IMR-90 (cell line): ENCODE measurements at regions of chr11 and their contacts with region 1.

Region 1: DNA sequence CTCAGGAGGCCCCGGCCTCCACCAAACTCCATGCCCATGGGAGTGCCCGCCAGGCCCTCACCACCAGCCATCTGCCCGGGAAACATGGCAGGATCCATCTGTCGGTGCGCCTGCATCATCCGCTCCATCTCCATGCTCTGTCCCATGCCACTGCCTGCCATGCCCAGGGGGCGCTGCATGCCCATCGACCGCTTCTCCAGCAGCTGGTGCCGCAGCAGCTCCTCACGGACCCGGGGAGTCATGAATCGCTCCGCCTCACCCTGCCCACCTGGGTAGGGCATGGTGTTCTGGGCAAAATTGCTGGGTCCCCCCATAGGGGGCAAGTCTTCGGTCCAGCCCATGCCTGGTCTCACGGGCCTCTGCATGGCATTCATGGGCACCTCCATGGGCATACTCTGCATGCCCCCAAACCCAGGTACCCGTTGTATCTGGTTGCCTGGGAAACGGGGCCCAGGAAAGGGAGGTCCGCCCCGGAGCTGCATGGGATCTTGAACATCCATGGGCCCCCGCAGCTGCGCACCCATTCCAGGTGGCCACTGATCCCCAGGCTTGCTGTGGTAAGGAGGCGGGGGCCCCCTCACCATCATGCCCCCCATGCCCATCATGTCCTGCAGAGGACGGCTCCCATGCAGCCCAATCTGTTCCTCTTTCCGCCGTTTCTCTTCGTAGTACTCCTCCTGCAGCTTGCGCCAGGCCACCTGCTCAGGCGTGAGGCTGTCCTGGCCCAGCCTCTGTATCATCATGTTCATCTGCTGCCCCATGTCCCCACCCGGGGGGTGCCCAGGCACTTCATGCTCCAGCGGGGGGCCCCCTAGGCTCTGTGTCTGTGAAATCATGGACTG is 18.0 kb downstream of the CXCR5 start:
- DNase-seq: no peak
- ATAC-seq: no peak
- H3K4me3 ChIP-seq: no peak overlapping the region
- H3K27ac ChIP-seq: no peak overlapping the region
- H3K4me1 ChIP-seq: peaks cover 2% of the 10 kb centered on the region; the same call in 1 of the 2 replicates
- H3K27me3 ChIP-seq: no peaks in the 10 kb centered on the region
- CTCF ChIP-seq: no peak
- POLR2A ChIP-seq: no peak
- RAD21 ChIP-seq: no peak

Region 2: DNA sequence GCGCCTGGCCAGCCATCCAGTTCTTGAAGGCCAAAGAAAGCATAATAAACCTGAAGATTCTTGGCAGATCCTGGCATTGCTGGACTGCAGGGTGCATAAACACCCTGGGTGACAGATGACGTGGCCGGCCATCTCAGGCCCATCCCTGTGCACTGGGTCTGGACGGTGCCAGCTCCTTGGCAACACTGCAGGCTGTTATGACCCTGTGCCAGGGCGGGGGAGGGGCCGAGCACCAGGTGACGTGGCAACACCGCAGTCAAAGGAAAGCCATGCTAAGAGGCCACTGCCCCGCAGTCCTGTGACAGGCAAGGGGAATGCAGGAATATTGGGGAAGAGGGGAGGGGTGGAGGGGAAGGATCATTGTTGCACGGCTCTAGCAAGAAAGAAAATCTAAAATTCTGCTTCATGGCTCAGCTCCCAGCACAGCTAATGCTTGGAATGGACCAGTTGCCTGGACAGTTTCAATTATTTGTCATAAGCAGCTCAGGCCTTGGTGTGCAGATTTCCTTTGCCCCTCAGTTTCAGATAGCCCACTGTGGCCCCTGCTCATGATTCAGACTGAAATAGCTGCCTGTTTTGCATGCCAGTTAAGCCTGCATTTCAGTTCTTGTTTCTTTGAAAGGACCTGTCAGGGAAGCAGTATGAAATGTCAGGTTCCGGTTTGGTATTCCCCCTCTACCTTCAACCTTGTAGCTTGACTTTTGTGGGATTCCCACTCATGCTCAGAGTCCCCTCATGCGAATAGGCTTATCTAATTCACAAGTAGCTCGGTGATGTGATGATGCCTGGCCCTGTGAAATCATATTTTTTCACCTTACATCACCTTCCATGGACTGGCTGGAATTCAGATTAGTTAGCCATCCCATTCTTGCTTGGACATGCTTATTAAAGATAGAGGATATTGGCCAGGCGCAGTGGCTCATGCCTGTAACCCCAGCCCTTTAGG is 81.0 kb before region 1 on chr11:
- CTCF ChIA-PET with region 1: no interaction called
- POLR2A ChIA-PET with region 1: no interaction called
- dilution Hi-C with region 1: no loop called
- in situ Hi-C with region 1: no loop called
- intact Hi-C with region 1: no loop called
- DNase-seq: no peak
- ATAC-seq: no peak
- H3K4me3 ChIP-seq: no peak overlapping the region
- H3K27ac ChIP-seq: no peak overlapping the region
- H3K4me1 ChIP-seq: no peaks in the 10 kb centered on the region
- H3K27me3 ChIP-seq: peaks cover 4% of the 10 kb centered on the region; the same call in 1 of the 2 replicates
- CTCF ChIP-seq: no peak
- POLR2A ChIP-seq: no peak
- RAD21 ChIP-seq: no peak

Region 3: DNA sequence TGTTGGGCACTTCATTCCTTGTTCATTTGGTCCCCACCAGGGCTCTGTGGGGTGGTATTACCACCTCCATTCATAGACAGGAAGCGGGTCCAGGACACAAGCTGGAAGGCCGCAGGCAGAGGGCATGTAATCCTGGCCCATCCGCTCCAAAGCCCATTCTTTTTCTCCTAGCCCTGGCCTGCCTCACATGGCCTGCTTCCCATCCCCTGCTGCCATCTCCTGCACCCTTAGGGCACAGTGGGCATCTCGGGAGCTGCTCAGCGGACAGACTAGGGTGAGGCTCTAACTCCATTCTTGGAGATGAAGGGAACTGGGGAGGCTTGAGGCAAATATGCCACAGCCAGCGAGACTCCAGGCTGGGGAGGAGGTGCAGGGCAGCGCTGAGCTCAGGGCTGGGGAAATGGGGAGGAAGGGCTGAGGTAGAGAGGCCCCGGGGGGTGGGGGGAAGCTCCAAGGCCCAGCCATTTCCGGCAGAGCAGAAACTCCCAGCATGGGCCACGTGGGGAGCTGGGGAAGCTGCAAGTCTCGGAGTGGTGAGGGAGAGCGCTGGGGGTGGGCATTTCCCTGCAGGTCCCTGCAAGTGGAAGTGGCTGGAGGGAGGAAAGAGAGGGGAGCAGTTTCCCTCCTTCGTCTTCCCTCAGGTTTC is 38.4 kb after region 1 on chr11:
- CTCF ChIA-PET with region 1: no interaction called
- POLR2A ChIA-PET with region 1: no interaction called
- dilution Hi-C with region 1: no loop called
- in situ Hi-C with region 1: loop called (anchors 5 kb)
- intact Hi-C with region 1: no loop called
- DNase-seq: no peak
- ATAC-seq: peak; percentile 70
- H3K4me3 ChIP-seq: no peak overlapping the region
- H3K27ac ChIP-seq: no peak overlapping the region
- H3K4me1 ChIP-seq: peaks cover 4% of the 10 kb centered on the region; the same call in 1 of the 2 replicates
- H3K27me3 ChIP-seq: peaks cover 2% of the 10 kb centered on the region
- CTCF ChIP-seq: no peak
- POLR2A ChIP-seq: no peak
- RAD21 ChIP-seq: no peak